Caco-2 (cell line): ENCODE measurements at regions of chr9 and their contacts with region 1.

Region 1: GRCh38 chr9:250039-250438 is 35.4 kb downstream of the DOCK8 start:
- DNase-seq: no peak
- H3K4me3 ChIP-seq: no peak overlapping the region
- H3K4me3 Mint-ChIP-seq: no peak overlapping the region
- H3K27ac Mint-ChIP-seq: no peak overlapping the region
- H3K4me1 ChIP-seq: no peaks in the 10 kb centered on the region
- H3K4me1 Mint-ChIP-seq: no peaks in the 10 kb centered on the region
- H3K27me3 ChIP-seq: no peaks in the 10 kb centered on the region
- H3K27me3 Mint-ChIP-seq: no peaks in the 10 kb centered on the region
- CTCF ChIP-seq: no peak

Region 2: DNA sequence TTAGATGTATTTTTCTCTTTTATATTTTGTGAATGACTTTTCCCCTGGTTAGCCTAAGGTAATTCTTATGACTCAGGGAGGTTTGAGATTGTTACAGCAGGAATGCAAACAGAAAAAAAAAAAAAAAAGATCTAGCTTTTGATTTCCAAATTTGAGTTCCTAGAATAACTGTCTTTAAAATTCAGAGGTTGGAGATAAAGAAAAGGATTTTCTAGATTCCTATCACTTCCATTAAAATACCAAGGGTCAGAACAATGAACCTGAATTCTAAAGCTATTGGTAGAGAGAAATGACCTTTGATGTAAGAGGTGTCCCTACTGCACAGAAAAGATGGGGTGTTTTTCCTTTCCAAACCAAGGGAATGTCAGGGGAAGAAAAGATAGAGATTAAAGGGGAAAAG is 227.2 kb after region 1 on chr9:
- CTCF ChIA-PET with region 1: no interaction called
- POLR2A ChIA-PET with region 1: interaction called, 11 read pairs
- intact Hi-C with region 1: no loop called
- DNase-seq: no peak
- H3K4me3 ChIP-seq: no peak overlapping the region
- H3K4me3 Mint-ChIP-seq: peak overlapping the region; percentile 25
- H3K27ac Mint-ChIP-seq: peak overlapping the region; percentile 95
- H3K4me1 ChIP-seq: peaks cover 72% of the 10 kb centered on the region
- H3K4me1 Mint-ChIP-seq: peaks cover 52% of the 10 kb centered on the region
- H3K27me3 ChIP-seq: no peaks in the 10 kb centered on the region
- H3K27me3 Mint-ChIP-seq: no peaks in the 10 kb centered on the region
- CTCF ChIP-seq: no peak